GM12878 (cell line): ENCODE measurements at regions of chr16 and their contacts with region 1.

Region 1: DNA sequence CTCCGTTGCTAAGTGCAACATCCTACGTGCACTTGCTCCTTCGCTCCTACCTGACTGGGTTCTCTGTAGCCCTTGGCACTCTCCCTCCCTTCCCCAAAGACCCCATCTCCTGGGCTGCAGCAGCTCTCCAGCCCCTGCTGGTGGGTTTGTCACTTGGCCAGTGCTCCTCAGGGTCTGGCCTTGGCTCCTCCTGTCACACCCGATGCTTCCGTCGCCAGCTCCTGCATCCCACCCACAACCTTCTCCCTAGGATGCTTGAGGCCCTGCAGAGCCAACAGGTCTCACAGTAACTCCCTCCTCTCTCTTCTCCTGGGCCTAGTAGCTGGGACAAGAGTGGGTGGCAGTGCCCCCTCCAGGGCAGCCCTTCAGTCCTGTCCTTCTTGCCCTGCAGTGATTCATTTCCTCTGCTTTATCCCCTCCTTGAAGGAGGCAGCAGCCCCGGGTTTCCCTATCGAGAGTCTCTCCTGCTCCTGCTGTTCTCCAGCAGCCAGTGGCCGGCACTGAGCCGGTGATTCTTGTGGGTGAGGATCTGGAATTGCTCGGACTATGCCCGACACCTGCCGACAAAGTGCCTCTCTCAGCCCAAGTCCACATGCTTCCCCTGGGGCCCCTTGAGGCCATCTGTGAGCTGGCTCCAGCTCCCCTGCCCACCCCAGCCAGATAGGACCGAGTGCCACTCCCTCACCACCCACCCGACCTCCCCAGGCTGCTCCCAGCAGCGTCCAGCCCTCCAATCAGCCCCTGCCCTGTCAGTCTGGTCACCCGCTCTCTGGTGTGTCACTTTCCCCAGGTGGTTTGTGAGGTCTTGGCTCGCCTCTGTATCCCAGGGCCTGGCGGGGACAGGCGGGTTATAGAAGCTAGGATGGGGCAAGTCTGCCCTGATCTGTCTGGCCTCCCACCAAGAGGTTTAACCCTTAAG is 3.8 kb downstream of the LITAFD start:
- DNase-seq: no peak
- ATAC-seq: peak; percentile 34
- H3K4me3 ChIP-seq: no peak overlapping the region
- H3K27ac ChIP-seq: no peak overlapping the region
- H3K4me1 ChIP-seq: peaks cover 14% of the 10 kb centered on the region
- H3K27me3 ChIP-seq: no peaks in the 10 kb centered on the region
- CTCF ChIP-seq: no peak
- EP300 ChIP-seq: no peak
- POLR2A ChIP-seq: peak; percentile 48
- RAD21 ChIP-seq: no peak

Region 2: DNA sequence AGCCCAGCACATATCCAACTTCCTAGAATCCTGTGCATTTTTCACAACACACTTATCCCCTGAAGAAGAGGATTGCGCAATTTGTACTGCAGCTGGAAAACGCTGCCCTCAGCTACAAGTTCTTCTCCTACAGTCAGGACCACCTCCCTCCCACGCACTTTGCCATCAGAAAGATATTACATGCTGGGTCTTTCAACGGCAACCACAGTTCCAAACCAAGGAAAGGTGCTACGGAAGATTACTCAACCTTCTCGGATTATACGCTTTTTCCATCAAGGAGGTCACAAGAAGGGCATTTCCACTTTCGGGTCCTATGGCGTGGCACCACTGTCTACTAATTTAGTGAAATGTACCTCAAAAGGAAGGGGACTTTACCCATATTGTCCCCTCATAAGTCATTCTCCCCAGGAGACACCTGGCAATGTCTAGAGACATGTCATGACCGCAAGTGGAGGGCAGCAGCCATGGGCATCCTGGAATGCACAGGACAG is 42.6 kb after region 1 on chr16:
- CTCF ChIA-PET with region 1: no interaction called
- POLR2A ChIA-PET with region 1: no interaction called
- RAD21 ChIA-PET with region 1: no interaction called
- SMC1A ChIA-PET with region 1: no interaction called
- in situ Hi-C with region 1: no loop called
- intact Hi-C with region 1: loop called (anchors 1 kb)
- DNase-seq: peak; percentile 59
- ATAC-seq: peak; percentile 61
- H3K4me3 ChIP-seq: no peak overlapping the region
- H3K27ac ChIP-seq: peak overlapping the region; percentile 37; the same call in 1 of the 2 replicates
- H3K4me1 ChIP-seq: peaks cover 47% of the 10 kb centered on the region
- H3K27me3 ChIP-seq: no peaks in the 10 kb centered on the region
- CTCF ChIP-seq: no peak
- EP300 ChIP-seq: peak in 1 of 2 experiments; percentile 17; a peak in 1 of 4 replicates
- POLR2A ChIP-seq: no peak
- RAD21 ChIP-seq: no peak